ENCODE measurements at regions of chr12 and their contacts with region 1.

Region 1: DNA sequence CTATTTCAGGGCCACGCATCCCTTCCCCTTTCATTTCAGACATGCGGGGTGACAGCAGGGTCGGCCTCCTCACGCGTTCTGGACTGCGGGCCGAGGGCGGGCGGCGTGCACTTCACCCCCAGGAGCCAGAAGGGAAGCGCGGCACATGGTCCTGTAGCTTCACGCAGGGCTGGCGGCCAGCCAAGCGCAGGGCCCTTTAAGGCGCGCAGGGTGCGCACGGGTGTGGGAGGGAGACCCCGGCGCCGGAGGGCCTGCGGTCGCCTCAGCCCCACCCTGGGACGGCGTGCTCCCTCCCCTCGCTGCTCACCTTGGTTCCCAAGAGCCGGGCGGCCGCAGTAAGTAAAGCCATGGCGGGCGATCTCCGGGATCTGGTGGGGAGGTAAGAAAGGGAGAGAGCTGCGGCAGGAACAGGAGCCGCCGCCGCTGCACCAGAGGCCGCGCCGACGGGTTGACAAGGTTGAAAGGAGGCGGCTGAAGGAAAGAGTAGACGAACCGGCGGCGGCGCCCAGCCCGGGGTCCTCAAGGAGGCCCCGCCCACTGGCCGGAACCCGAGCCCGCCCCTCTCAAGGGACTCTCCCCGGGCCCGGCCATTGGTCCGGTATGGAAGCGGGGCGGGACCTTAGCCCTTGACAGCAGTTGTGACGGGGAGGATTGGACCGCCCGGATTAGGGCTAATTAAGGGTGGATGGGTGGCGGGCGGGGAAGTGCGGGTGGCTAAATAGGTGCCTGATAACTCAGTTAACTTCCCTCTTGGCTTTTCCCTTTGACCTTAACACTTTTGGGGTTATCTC is at the start of gene CS:
- DNase-seq: peak; percentile 99
- H3K4me3 ChIP-seq: peak within 1 kb of the TSS; percentile 63
- H3K4me3 Mint-ChIP-seq: peak within 1 kb of the TSS; percentile 94
- H3K27ac Mint-ChIP-seq: peak within 1 kb of the TSS; percentile 95
- H3K4me1 ChIP-seq: peaks cover 10% of the 10 kb centered on the region
- H3K4me1 Mint-ChIP-seq: peaks cover 17% of the 10 kb centered on the region
- H3K27me3 ChIP-seq: no peaks in the 10 kb centered on the region
- H3K27me3 Mint-ChIP-seq: no peaks in the 10 kb centered on the region
- CTCF ChIP-seq: no peak
- total RNA-seq, gene CS: 241 and 263 TPM in 2 replicates

Region 2: GRCh38 chr12:56230432-56231183 is 69.4 kb before region 1 on chr12:
- CTCF ChIA-PET with region 1: no interaction called
- POLR2A ChIA-PET with region 1: no interaction called
- intact Hi-C with region 1: loop called (anchors 2 kb)
- DNase-seq: peak; percentile 94 to 96
- H3K4me3 ChIP-seq: peak overlapping the region; percentile 43
- H3K4me3 Mint-ChIP-seq: peak overlapping the region; percentile 86
- H3K27ac Mint-ChIP-seq: peak overlapping the region; percentile 85
- H3K4me1 ChIP-seq: peaks cover 29% of the 10 kb centered on the region
- H3K4me1 Mint-ChIP-seq: peaks cover 25% of the 10 kb centered on the region
- H3K27me3 ChIP-seq: no peaks in the 10 kb centered on the region
- H3K27me3 Mint-ChIP-seq: no peaks in the 10 kb centered on the region
- CTCF ChIP-seq: no peak

Region 3: GRCh38 chr12:56286044-56286830 is 13.8 kb before region 1 on chr12:
- CTCF ChIA-PET with region 1: interaction called, 5 read pairs
- POLR2A ChIA-PET with region 1: interaction called, 3 read pairs
- intact Hi-C with region 1: loop called (anchors 1 kb)
- DNase-seq: no peak
- H3K4me3 ChIP-seq: no peak overlapping the region
- H3K4me3 Mint-ChIP-seq: peak overlapping the region; percentile 1
- H3K27ac Mint-ChIP-seq: peak overlapping the region; percentile 58
- H3K4me1 ChIP-seq: peaks cover 24% of the 10 kb centered on the region
- H3K4me1 Mint-ChIP-seq: peaks cover 21% of the 10 kb centered on the region
- H3K27me3 ChIP-seq: no peaks in the 10 kb centered on the region
- H3K27me3 Mint-ChIP-seq: no peaks in the 10 kb centered on the region
- CTCF ChIP-seq: no peak

Measured in Caco-2 (cell line).